Esophagus squamous epithelium (tissue), 5 donors: ENCODE measurements at regions of chr6 and their contacts with region 1.

Region 1: GRCh38 chr6:43059168-43060033 is at the starts of genes KLC4 and MRPL2:
- DNase-seq: peak; percentile 93
- H3K4me3 ChIP-seq: peak within 1 kb of the TSS; percentile 83 to 97 (median 90)
- H3K27ac ChIP-seq: peak within 1 kb of the TSS; percentile 89 to 97 (median 94)
- H3K4me1 ChIP-seq: peaks cover 12 to 40% (median 20%) of the 10 kb centered on the region in 3 donors
- H3K27me3 ChIP-seq: no peaks in the 10 kb centered on the region
- CTCF ChIP-seq: peak in 1 of 6 experiments; percentile 4
- POLR2A ChIP-seq: peak in 3 of 4 donors; percentile 62 to 84 (median 77)
- total RNA-seq, gene KLC4: 4.5 to 15.8 (median 9.4) TPM
- total RNA-seq, gene MRPL2: 23.3 to 29.1 (median 24.5) TPM

Region 2: GRCh38 chr6:42952389-42952788 is 107.0 kb before region 1 on chr6:
- intact Hi-C with region 1: no loop called
- DNase-seq: no peak
- H3K4me3 ChIP-seq: no peak overlapping the region
- H3K27ac ChIP-seq: no peak overlapping the region
- H3K4me1 ChIP-seq: no peaks in the 10 kb centered on the region
- H3K27me3 ChIP-seq: no peaks in the 10 kb centered on the region
- CTCF ChIP-seq: no peak
- POLR2A ChIP-seq: no peak

Region 3: GRCh38 chr6:42963855-42964605 is 95.4 kb before region 1 on chr6:
- intact Hi-C with region 1: loop called (anchors 10 kb)
- DNase-seq: no peak
- H3K4me3 ChIP-seq: no peak overlapping the region
- H3K27ac ChIP-seq: no peak overlapping the region
- H3K4me1 ChIP-seq: peaks cover 14 to 20% (median 17%) of the 10 kb centered on the region in 3 donors
- H3K27me3 ChIP-seq: no peaks in the 10 kb centered on the region
- CTCF ChIP-seq: no peak
- POLR2A ChIP-seq: no peak

Region 4: GRCh38 chr6:43391440-43392031 is 332.1 kb after region 1 on chr6:
- intact Hi-C with region 1: no loop called
- DNase-seq: no peak
- H3K4me3 ChIP-seq: no peak overlapping the region
- H3K27ac ChIP-seq: no peak overlapping the region
- H3K4me1 ChIP-seq: peaks cover 0 to 10% (median 0%) of the 10 kb centered on the region in 3 donors
- H3K27me3 ChIP-seq: peaks cover 0 to 29% (median 0%) of the 10 kb centered on the region in 4 donors
- CTCF ChIP-seq: no peak
- POLR2A ChIP-seq: no peak